ENCODE measurements at regions of chr19 and their contacts with region 1.

Region 1: DNA sequence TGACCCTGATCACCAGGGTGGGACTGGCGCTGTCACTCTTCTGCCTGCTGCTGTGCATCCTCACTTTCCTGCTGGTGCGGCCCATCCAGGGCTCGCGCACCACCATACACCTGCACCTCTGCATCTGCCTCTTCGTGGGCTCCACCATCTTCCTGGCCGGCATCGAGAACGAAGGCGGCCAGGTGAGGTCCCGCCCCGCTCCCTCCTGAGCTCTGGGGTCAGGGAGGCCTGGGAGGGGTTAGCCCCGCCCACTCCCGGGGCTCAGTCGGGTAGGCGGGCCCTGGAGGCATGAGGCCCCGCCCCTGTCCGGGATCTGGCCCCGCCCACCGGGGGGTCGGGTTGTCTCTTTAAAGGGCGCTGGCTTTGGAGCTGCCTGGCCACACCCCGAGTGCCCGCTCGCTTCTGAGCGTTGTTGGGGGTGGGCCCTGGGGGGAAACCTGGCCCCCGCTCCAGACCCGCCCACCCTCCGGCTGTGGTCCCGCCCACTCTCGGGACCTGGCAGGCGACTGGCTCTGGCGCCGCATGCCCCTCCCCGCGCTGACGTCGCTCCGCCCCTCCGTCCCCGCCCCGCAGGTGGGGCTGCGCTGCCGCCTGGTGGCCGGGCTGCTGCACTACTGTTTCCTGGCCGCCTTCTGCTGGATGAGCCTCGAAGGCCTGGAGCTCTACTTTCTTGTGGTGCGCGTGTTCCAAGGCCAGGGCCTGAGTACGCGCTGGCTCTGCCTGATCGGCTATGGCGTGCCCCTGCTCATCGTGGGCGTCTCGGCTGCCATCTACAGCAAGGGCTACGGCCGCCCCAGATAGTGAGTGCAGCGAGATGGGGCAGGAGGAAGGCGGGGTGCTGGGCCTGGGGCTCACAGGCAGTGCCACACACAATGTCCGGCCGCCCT is 13.1 kb downstream of the DDX39A start:
- DNase-seq: peak; percentile 94

Region 2: GRCh38 chr19:14198384-14199376 is 207.3 kb before region 1 on chr19:
- intact Hi-C with region 1: loop called (anchors 10 kb)
- DNase-seq: no peak

Region 3: DNA sequence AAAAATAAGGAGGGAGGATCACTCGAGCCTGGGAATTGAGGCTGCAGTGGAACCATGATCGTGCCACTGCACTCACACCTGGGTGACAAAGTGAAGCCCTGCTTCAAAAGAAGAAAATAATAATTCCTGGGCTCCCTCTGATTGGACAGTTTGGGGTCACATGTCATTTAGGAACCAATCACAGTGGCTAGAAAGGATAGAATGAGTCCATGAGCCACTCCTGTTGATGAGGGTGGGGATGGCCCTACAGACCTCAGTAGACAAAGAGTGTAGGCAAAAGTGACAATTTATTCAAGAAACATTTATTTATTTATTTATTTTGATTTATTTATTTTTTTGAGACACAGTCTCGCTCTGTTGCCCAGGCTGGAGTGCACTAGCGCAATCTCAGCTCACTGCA is 51.6 kb before region 1 on chr19:
- intact Hi-C with region 1: loop called (anchors 10 kb)
- DNase-seq: no peak

Measured in cardiac septum (tissue), 1 donor.